Endothelial cell of umbilical vein (primary cell): ENCODE measurements at regions of chr4 and their contacts with region 1.

Region 1: GRCh38 chr4:163494360-163495162 is at the start of gene TMA16:
- DNase-seq: peak; percentile 93
- H3K4me3 ChIP-seq: peak within 1 kb of the TSS; percentile 83 to 93 (median 90)
- H3K27ac ChIP-seq: peak within 1 kb of the TSS; percentile 87
- H3K4me1 ChIP-seq: peaks cover 23% of the 10 kb centered on the region
- H3K27me3 ChIP-seq: no peaks in the 10 kb centered on the region
- CTCF ChIP-seq: no peak
- POLR2A ChIP-seq: peak; percentile 83
- total RNA-seq, gene TMA16: 41.1 and 42.7 TPM in 2 replicates

Region 2: DNA sequence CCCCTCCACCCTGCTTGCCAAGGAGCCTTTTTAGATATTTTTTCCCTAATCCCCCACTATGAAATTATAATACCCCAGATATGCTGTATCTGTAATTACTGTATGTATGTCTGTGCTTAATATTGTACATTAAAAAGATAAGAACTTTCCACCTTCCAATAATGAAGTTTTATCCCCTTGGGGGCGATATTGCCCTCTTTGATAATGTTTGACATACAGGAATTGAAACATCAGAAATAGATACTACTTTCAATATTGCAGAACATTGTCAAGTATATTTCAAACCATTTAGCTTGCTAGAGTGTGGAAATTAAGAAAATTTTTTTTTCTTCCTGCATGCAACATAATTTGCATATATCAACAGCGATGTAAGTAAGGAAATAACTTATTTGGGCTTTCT is 386.8 kb before region 1 on chr4:
- CTCF ChIA-PET with region 1: no interaction called
- POLR2A ChIA-PET with region 1: no interaction called
- dilution Hi-C with region 1: no loop called
- intact Hi-C with region 1: loop called (anchors 10 kb)
- DNase-seq: peak; percentile 63
- H3K4me3 ChIP-seq: no peak overlapping the region
- H3K27ac ChIP-seq: no peak overlapping the region
- H3K4me1 ChIP-seq: no peaks in the 10 kb centered on the region
- H3K27me3 ChIP-seq: no peaks in the 10 kb centered on the region
- CTCF ChIP-seq: peak in 1 of 2 donors; percentile 1
- POLR2A ChIP-seq: no peak

Region 3: GRCh38 chr4:163166041-163166579 is 328.5 kb before region 1 on chr4:
- CTCF ChIA-PET with region 1: no interaction called
- POLR2A ChIA-PET with region 1: no interaction called
- dilution Hi-C with region 1: no loop called
- intact Hi-C with region 1: loop called (anchors 1 kb)
- DNase-seq: peak; percentile 73
- H3K4me3 ChIP-seq: peak overlapping the region; percentile 97
- H3K27ac ChIP-seq: peak overlapping the region; percentile 83
- H3K4me1 ChIP-seq: peaks cover 28% of the 10 kb centered on the region
- H3K27me3 ChIP-seq: no peaks in the 10 kb centered on the region
- CTCF ChIP-seq: no peak
- POLR2A ChIP-seq: no peak

Region 4: DNA sequence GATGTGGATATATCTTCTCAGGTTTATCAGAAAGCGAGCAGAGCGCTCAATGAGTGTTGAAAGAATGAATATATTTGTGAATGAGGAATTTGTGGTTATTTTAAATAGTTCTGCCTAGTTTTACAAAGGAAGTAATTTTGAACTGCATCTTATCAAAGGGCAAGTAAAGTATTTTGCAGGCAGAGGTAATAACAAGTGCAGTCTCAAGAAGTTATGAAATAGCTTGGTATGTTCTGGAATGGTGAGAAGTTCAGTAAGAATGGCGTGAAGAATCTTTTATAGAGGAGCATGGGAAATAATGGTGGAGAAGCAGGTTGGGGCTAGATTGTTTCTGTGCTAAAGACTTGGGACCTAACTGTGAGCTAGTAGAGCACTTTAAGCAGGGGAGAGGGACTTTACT is 10.8 kb after region 1 on chr4:
- CTCF ChIA-PET with region 1: interaction called, 7 read pairs
- POLR2A ChIA-PET with region 1: no interaction called
- dilution Hi-C with region 1: no loop called
- intact Hi-C with region 1: loop called (anchors 2 kb)
- DNase-seq: no peak
- H3K4me3 ChIP-seq: no peak overlapping the region
- H3K27ac ChIP-seq: no peak overlapping the region
- H3K4me1 ChIP-seq: no peaks in the 10 kb centered on the region
- H3K27me3 ChIP-seq: no peaks in the 10 kb centered on the region
- CTCF ChIP-seq: no peak
- POLR2A ChIP-seq: no peak

Region 5: GRCh38 chr4:163535657-163536056 is 41.1 kb after region 1 on chr4:
- CTCF ChIA-PET with region 1: no interaction called
- POLR2A ChIA-PET with region 1: no interaction called
- dilution Hi-C with region 1: no loop called
- intact Hi-C with region 1: no loop called
- DNase-seq: no peak
- H3K4me3 ChIP-seq: no peak overlapping the region
- H3K27ac ChIP-seq: no peak overlapping the region
- H3K4me1 ChIP-seq: no peaks in the 10 kb centered on the region
- H3K27me3 ChIP-seq: no peaks in the 10 kb centered on the region
- CTCF ChIP-seq: peak in 1 of 2 donors; percentile 9
- POLR2A ChIP-seq: no peak